ENCODE measurements at regions of chr2 and their contacts with region 1.

Region 1: DNA sequence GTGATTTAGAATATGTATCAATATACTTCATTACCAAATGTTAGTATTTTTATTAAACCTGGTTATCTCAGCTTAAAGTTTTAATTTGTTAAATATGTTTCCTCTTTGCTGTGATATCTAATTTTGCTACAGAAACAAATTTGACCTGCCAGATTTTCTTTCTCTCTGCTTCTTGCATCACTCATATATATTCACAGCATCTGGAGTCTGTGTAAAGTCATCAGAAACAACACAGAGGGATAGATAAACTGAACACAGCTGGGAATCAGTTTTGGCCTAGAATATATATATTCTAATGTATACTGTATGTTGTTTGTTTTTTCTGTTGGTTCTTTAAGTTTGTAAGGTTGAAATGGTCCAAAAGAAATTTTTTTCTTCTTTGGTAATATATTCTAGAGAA is 8.5 kb downstream of the PSMD14 start:
- DNase-seq: no peak
- H3K4me3 ChIP-seq: no peak overlapping the region
- H3K27ac ChIP-seq: no peak overlapping the region
- H3K4me1 ChIP-seq: no peaks in the 10 kb centered on the region
- CTCF ChIP-seq: no peak

Region 2: DNA sequence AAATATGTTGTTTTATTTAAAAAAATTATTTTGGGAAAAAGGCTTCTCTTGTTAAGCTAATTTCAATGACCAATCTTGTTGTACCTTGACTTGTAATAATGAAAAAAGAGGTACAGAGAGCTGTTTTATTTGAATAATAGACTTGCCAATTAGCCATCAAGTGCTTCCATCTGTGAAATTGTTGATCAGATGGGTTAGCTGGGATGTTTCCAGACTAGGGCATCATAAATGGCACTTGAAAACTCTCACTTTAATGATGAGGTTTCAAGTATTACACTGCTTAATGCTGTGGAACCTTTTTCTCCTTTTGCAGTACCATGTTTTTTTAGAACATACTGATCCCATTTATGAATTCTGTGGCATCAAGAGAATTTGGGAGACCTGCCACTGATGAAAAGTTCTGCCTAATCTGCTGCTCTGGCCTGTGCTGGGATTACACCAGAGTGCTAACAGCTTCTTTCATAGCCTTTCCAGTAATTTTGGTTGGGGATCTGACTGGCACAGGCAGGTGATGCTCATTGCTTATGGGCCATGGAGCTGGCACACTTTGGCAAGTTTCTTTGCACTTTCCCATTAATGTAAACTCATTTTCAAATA is 15.8 kb after region 1 on chr2:
- CTCF ChIA-PET with region 1: no interaction called
- POLR2A ChIA-PET with region 1: interaction called, 4 read pairs
- intact Hi-C with region 1: loop called (anchors 2 kb)
- DNase-seq: no peak
- H3K4me3 ChIP-seq: no peak overlapping the region
- H3K27ac ChIP-seq: no peak overlapping the region
- H3K4me1 ChIP-seq: no peaks in the 10 kb centered on the region
- CTCF ChIP-seq: no peak

Region 3: DNA sequence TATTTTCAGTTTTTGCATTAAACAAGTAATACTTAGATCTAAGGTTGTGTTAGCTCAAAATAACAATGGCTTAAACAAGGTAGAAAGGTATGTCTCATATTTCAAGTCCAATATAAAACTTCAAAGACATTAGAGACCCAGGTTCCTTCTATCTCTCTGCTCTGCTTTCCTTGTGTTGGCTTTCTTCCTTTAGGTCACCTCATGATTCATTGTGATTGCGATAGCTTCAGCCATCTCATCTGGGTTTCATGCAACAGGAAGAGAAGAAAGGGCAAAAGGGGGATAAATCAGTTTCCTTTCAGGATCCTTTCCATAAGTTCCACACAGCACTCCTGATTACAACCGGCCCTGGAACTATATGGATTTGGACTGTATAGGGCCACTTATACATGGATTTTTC is 83.4 kb after region 1 on chr2:
- CTCF ChIA-PET with region 1: no interaction called
- POLR2A ChIA-PET with region 1: no interaction called
- intact Hi-C with region 1: no loop called
- DNase-seq: no peak
- H3K4me3 ChIP-seq: no peak overlapping the region
- H3K27ac ChIP-seq: no peak overlapping the region
- H3K4me1 ChIP-seq: no peaks in the 10 kb centered on the region
- CTCF ChIP-seq: no peak

Measured in OCI-LY7 (cell line).